ENCODE measurements at regions of chr5 and their contacts with region 1.

Region 1: GRCh38 chr5:180343831-180344327 is 9.3 kb downstream of the GFPT2 start:
- DNase-seq: peak in 1 of 2 experiments; percentile 41
- ATAC-seq: peak; percentile 37 to 54; a peak in 3 of 6 replicates
- H3K4me3 ChIP-seq: no peak overlapping the region
- H3K27ac ChIP-seq: peak overlapping the region; percentile 37 to 71; a peak in 4 of 6 replicates
- H3K4me1 ChIP-seq: peaks cover 35% of the 10 kb centered on the region
- CTCF ChIP-seq: no peak
- EP300 ChIP-seq: no peak
- POLR2A ChIP-seq: no peak
- RAD21 ChIP-seq: no peak

Region 2: GRCh38 chr5:180333661-180334060 is 10.2 kb before region 1 on chr5:
- CTCF ChIA-PET with region 1: interaction called, 45 read pairs
- POLR2A ChIA-PET with region 1: no interaction called
- DNase-seq: peak; percentile 81 to 85
- ATAC-seq: peak in 1 of 2 experiments; percentile 47; a peak in 3 of 6 replicates
- H3K4me3 ChIP-seq: no peak overlapping the region
- H3K27ac ChIP-seq: peak overlapping the region; percentile 82 to 87
- H3K4me1 ChIP-seq: peaks cover 58% of the 10 kb centered on the region
- CTCF ChIP-seq: no peak
- EP300 ChIP-seq: peak; percentile 47 to 54; a peak in 2 of 5 replicates
- POLR2A ChIP-seq: no peak
- RAD21 ChIP-seq: peak in 1 of 2 experiments; percentile 5; a peak in 1 of 5 replicates

Region 3: GRCh38 chr5:180366326-180366725 is 22.4 kb after region 1 on chr5:
- CTCF ChIA-PET with region 1: no interaction called
- POLR2A ChIA-PET with region 1: no interaction called
- DNase-seq: no peak
- ATAC-seq: no peak
- H3K4me3 ChIP-seq: no peak overlapping the region
- H3K27ac ChIP-seq: peak overlapping the region in 1 of 2 experiments; percentile 15; a peak in 1 of 6 replicates
- H3K4me1 ChIP-seq: no peaks in the 10 kb centered on the region
- CTCF ChIP-seq: no peak
- EP300 ChIP-seq: no peak
- POLR2A ChIP-seq: no peak
- RAD21 ChIP-seq: no peak